ENCODE measurements at regions of chr2 and their contacts with region 1.

Region 1: GRCh38 chr2:157443795-157444640 is at the start of gene CYTIP:
- DNase-seq: peak; percentile 52
- ATAC-seq: peak; percentile 53
- H3K4me3 Mint-ChIP-seq: peak within 1 kb of the TSS; percentile 95
- H3K27ac Mint-ChIP-seq: peak within 1 kb of the TSS; percentile 96
- H3K4me1 Mint-ChIP-seq: peaks cover 61% of the 10 kb centered on the region
- H3K27me3 Mint-ChIP-seq: no peaks in the 10 kb centered on the region
- CTCF ChIP-seq: no peak
- total RNA-seq, gene CYTIP: 129 and 130 TPM in 2 replicates

Region 2: GRCh38 chr2:156192468-156192867 is 1251.5 kb before region 1 on chr2:
- CTCF ChIA-PET with region 1: no interaction called
- POLR2A ChIA-PET with region 1: no interaction called
- intact Hi-C with region 1: no loop called
- DNase-seq: no peak
- ATAC-seq: no peak
- H3K4me3 Mint-ChIP-seq: no peak overlapping the region
- H3K27ac Mint-ChIP-seq: no peak overlapping the region
- H3K4me1 Mint-ChIP-seq: no peaks in the 10 kb centered on the region
- H3K27me3 Mint-ChIP-seq: no peaks in the 10 kb centered on the region
- CTCF ChIP-seq: no peak

Region 3: DNA sequence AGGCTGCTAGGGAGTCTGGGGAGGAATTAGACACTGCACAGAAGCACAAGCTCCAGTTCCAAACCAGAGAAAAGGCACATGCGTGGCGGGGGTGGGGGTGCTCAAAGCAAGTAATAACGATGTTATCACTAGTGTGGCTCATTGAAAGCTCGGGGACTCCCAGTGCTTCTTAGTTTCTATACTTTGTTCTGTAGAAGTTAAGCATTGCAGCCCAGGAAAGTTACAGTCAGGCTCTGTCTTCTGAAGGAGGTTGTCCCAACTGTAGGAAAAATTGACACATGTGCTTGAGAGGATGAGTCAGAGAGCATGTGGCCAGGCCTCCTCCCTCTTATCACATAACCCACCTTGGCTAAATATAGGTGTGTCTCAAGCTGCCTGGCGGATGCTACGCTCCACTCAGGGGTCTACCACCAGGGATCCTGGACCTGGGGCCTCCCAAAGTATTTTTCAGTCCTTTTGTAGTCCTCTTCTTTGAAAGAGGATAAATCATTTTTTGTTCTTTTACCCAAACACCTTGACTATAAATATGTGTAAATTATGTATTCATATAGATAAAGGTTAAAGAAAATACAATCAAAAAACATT is 182.7 kb before region 1 on chr2:
- CTCF ChIA-PET with region 1: no interaction called
- POLR2A ChIA-PET with region 1: no interaction called
- intact Hi-C with region 1: no loop called
- DNase-seq: no peak
- ATAC-seq: peak; percentile 21
- H3K4me3 Mint-ChIP-seq: no peak overlapping the region
- H3K27ac Mint-ChIP-seq: no peak overlapping the region
- H3K4me1 Mint-ChIP-seq: peaks cover 5% of the 10 kb centered on the region
- H3K27me3 Mint-ChIP-seq: peaks cover 19% of the 10 kb centered on the region
- CTCF ChIP-seq: no peak

Region 4: GRCh38 chr2:157404363-157404762 is 39.7 kb before region 1 on chr2:
- CTCF ChIA-PET with region 1: no interaction called
- POLR2A ChIA-PET with region 1: interaction called, 29 read pairs
- intact Hi-C with region 1: loop called (anchors 1 kb)
- DNase-seq: no peak
- ATAC-seq: peak; percentile 96
- H3K4me3 Mint-ChIP-seq: peak overlapping the region; percentile 50
- H3K27ac Mint-ChIP-seq: peak overlapping the region; percentile 88
- H3K4me1 Mint-ChIP-seq: peaks cover 62% of the 10 kb centered on the region
- H3K27me3 Mint-ChIP-seq: no peaks in the 10 kb centered on the region
- CTCF ChIP-seq: no peak

Region 5: DNA sequence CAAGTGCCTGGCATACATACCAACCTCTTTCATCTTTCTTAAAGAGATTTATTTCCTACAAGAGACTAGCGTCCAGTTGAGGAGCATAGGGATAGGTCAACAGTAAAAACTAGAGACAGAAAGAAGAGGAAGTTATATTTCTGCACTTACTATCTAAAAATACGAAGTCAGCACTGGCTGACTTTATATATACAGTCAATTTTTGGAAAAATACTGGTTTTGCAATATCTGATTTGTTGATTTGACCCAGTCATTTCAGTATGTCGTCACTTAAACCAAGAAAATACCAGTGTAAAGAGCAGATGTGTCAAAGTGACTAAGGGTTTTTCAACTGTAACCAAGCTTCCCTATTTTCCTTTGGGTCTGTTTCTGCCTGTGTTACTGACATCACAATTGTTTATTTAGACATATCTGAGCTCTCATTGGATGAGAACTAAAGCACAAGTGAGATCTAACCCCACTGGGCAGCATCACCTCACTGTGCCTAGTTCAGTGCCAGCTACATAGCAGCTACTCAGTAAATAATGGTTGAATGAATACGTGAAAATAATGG is 23.2 kb before region 1 on chr2:
- CTCF ChIA-PET with region 1: interaction called, 7 read pairs
- POLR2A ChIA-PET with region 1: interaction called, 185 read pairs
- intact Hi-C with region 1: loop called (anchors 1 kb)
- DNase-seq: no peak
- ATAC-seq: peak; percentile 73
- H3K4me3 Mint-ChIP-seq: peak overlapping the region; percentile 63
- H3K27ac Mint-ChIP-seq: peak overlapping the region; percentile 90
- H3K4me1 Mint-ChIP-seq: peaks cover 58% of the 10 kb centered on the region
- H3K27me3 Mint-ChIP-seq: no peaks in the 10 kb centered on the region
- CTCF ChIP-seq: no peak

Region 6: GRCh38 chr2:157433394-157433793 is 10.6 kb before region 1 on chr2:
- CTCF ChIA-PET with region 1: interaction called, 4 read pairs
- POLR2A ChIA-PET with region 1: interaction called, 14 read pairs
- intact Hi-C with region 1: loop called (anchors 1 kb)
- DNase-seq: no peak
- ATAC-seq: no peak
- H3K4me3 Mint-ChIP-seq: peak overlapping the region; percentile 57
- H3K27ac Mint-ChIP-seq: peak overlapping the region; percentile 61
- H3K4me1 Mint-ChIP-seq: peaks cover 86% of the 10 kb centered on the region
- H3K27me3 Mint-ChIP-seq: no peaks in the 10 kb centered on the region
- CTCF ChIP-seq: no peak

Region 7: GRCh38 chr2:157468931-157469708 is 25.1 kb after region 1 on chr2:
- CTCF ChIA-PET with region 1: interaction called, 6 read pairs
- POLR2A ChIA-PET with region 1: interaction called, 201 read pairs
- intact Hi-C with region 1: loop called (anchors 1 kb)
- DNase-seq: no peak
- ATAC-seq: peak; percentile 81
- H3K4me3 Mint-ChIP-seq: peak overlapping the region; percentile 81
- H3K27ac Mint-ChIP-seq: peak overlapping the region; percentile 99
- H3K4me1 Mint-ChIP-seq: peaks cover 87% of the 10 kb centered on the region
- H3K27me3 Mint-ChIP-seq: no peaks in the 10 kb centered on the region
- CTCF ChIP-seq: no peak